ENCODE measurements at regions of chr3 and their contacts with region 1.

Region 1: DNA sequence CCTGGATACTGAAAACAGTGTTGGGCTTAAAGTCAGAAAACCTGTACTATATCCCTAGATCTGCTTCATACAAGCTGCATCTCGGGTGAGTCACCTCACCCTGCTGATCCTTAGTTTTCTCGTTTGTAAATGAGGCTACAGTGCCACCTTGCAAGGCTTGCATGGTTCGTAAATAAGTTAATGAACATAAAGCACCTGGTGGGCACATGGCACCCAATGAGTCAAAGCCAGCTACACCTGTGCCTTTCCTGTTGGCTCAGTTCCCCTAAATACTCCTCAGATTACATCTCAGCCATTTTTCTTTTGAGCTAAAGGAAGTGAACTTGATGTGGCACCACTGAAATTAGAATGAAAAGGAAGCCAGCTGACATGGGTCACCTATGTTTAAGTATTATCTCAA is 26.5 kb downstream of the RTP1 start:
- DNase-seq: no peak
- ATAC-seq: no peak
- H3K4me3 ChIP-seq: no peak overlapping the region
- H3K27ac ChIP-seq: no peak overlapping the region
- H3K4me1 ChIP-seq: no peaks in the 10 kb centered on the region
- H3K27me3 ChIP-seq: no peaks in the 10 kb centered on the region

Region 2: GRCh38 chr3:187295316-187296034 is 71.7 kb after region 1 on chr3:
- intact Hi-C with region 1: loop called in 1 of 4 experiments (anchors 5 kb)
- DNase-seq: no peak
- ATAC-seq: no peak
- H3K4me3 ChIP-seq: no peak overlapping the region
- H3K27ac ChIP-seq: no peak overlapping the region
- H3K4me1 ChIP-seq: peaks cover 6% of the 10 kb centered on the region
- H3K27me3 ChIP-seq: no peaks in the 10 kb centered on the region

Region 3: GRCh38 chr3:187679638-187680396 is 456.0 kb after region 1 on chr3:
- intact Hi-C with region 1: loop called (anchors 2 to 5 kb)
- DNase-seq: peak; percentile 77 to 91 (median 85)
- ATAC-seq: peak; percentile 92 to 94
- H3K4me3 ChIP-seq: no peak overlapping the region
- H3K27ac ChIP-seq: no peak overlapping the region
- H3K4me1 ChIP-seq: no peaks in the 10 kb centered on the region
- H3K27me3 ChIP-seq: peaks cover 2% of the 10 kb centered on the region

Measured in right cardiac atrium (tissue), 5 donors.